ENCODE measurements at regions of chr15 and their contacts with region 1.

Region 1: GRCh38 chr15:72285927-72286516 is 13.7 kb upstream of the PARP6 start:
- DNase-seq: no peak
- H3K4me3 ChIP-seq: no peak overlapping the region
- H3K27ac ChIP-seq: no peak overlapping the region
- H3K4me1 ChIP-seq: no peaks in the 10 kb centered on the region
- H3K27me3 ChIP-seq: no peaks in the 10 kb centered on the region
- CTCF ChIP-seq: peak in 2 of 3 experiments; percentile 33 to 41

Region 2: GRCh38 chr15:72078887-72079286 is 207.1 kb before region 1 on chr15:
- intact Hi-C with region 1: no loop called
- DNase-seq: no peak
- H3K4me3 ChIP-seq: no peak overlapping the region
- H3K27ac ChIP-seq: no peak overlapping the region
- H3K4me1 ChIP-seq: peaks cover 4 to 5% of the 10 kb centered on the region in 2 donors
- H3K27me3 ChIP-seq: no peaks in the 10 kb centered on the region
- CTCF ChIP-seq: no peak

Region 3: DNA sequence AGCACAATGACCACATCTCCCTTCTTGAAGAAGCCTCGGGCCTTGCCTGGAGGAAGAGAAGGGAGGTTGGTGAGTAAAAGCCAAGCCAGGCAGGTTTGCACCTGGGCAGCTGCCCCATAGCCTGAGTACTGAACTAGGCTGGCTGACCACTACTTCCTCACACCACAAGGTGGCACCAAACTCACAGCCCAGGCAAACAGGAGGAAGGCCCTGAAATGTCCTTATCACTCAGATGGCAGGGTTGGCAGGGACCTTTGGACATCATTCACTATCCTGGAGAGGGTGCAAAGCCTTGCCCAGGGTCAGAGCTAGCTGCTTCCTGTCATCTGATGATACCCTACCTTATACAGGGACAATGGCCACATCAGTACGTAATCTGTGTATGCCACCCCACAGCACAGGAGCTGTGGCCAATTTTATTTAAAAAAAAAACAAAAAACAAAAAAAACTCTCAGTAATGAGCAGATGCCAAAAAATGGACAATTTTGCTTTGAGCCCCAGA is 86.3 kb before region 1 on chr15:
- intact Hi-C with region 1: loop called (anchors 1 kb)
- DNase-seq: peak; percentile 28 to 88
- H3K4me3 ChIP-seq: no peak overlapping the region
- H3K27ac ChIP-seq: peak overlapping the region in 1 of 2 donors; percentile 4
- H3K4me1 ChIP-seq: peaks cover 6 to 7% of the 10 kb centered on the region in 2 donors
- H3K27me3 ChIP-seq: no peaks in the 10 kb centered on the region
- CTCF ChIP-seq: peak; percentile 86 to 95 (median 90)

Region 4: DNA sequence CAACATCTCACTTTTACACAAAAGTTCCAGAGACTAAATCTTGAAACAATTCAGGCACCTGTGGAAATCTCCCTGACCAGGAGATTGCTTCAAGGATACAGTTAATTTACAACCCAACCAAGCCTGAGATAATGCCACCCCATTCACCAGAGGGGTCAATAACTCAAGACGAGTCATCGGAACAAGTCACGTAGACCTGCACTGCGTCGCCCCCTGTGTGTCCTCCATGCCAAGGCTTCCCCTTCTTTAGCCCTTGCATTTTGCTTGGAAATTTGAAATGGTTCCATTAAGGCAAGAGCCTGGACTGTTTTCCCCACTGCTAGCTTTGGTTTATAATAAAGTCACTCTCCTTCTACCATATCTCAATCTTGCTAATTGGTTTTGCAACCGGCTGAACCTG is 637.3 kb after region 1 on chr15:
- intact Hi-C with region 1: no loop called
- DNase-seq: no peak
- H3K4me3 ChIP-seq: no peak overlapping the region
- H3K27ac ChIP-seq: no peak overlapping the region
- H3K4me1 ChIP-seq: no peaks in the 10 kb centered on the region
- H3K27me3 ChIP-seq: no peaks in the 10 kb centered on the region
- CTCF ChIP-seq: no peak